Common myeloid progenitor, CD34-positive (primary cell): ENCODE measurements at regions of chr14 and their contacts with region 1.

Region 1: DNA sequence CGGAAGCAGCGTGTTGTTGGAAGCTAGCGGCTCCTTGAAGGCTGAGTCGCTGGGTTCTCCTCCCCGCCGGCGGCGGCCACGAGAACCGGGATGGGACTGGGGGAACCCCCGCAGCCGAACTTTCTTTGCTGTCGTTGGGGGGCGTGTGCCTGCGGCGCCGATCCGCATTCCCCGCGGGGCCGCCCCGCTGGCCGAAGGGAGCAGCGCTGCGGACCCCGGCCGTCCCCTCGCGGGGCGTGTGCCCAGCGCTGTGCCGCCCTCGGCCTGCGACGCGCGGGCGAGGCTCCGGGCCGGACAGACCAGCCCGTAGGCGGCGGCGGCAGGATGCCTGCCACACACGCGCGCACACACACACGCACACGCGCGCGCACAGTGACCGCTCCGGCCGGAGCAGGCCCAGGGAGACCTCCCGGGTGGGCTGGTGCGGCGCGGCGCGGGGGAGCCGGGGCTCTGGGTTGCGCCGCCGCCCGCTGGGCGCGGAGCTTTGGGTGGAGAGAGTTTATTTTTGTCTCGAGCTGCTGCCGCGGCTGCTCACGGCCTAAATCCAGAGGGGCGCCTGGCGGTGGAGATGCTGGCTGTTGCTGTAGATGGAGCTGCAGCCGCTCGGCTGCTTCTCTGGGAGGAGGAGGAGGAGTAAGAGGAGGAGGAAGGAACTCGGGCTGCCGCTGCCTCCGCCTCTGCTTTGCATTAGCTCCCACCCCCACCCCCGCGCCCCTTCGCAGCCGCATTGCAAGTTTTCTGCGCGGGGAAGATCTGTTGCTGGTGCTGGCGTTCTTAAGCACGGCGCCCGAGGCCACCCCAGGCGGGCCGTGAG is at the start of gene SAMD4A:
- DNase-seq: peak; percentile 71 to 85 (median 77)
- H3K4me3 ChIP-seq: peak within 1 kb of the TSS; percentile 65 to 92 (median 71)
- H3K27ac ChIP-seq: no peak within 1 kb of the TSS
- H3K4me1 ChIP-seq: peaks cover 7 to 39% (median 32%) of the 10 kb centered on the region in 4 experiments
- H3K27me3 ChIP-seq: peaks cover 0 to 15% (median 0%) of the 10 kb centered on the region in 5 experiments

Region 2: DNA sequence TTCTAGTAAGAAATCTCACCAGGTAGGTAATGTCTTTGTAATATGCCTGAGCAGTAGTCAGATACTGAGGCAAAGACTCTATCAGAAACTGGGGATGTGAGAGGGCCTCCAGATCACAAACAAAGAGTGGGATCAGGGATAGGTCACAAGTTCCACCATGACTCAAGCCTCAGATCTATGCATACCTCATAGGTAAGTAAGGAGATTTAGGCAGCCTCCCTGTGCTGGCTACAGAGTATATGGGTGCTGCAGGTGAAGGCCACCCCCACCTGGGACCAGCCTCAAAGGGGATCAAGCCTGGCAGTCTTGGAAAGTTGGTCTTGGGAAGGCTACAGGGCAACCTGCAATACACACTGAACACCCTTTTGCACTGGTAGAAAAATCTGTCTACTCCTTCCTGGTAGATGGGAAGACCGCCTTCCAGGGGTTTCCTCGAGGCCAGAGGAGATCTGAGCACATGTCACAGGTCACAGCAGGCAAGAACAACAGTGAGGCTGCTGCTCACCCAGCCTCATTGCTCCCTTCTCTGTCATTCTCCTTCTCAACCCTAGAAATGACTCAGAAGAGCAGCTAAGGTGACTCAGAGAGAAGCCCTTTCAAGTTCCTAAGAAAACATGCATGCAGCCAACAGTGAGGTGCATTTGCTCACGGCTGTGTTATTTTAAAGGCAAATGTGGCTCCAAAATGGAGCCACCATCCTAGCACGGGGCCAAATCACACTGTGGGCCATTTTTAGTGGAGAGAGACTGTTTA is 313.2 kb before region 1 on chr14:
- CTCF ChIA-PET with region 1: no interaction called
- POLR2A ChIA-PET with region 1: no interaction called
- DNase-seq: no peak
- H3K4me3 ChIP-seq: no peak overlapping the region
- H3K27ac ChIP-seq: no peak overlapping the region
- H3K4me1 ChIP-seq: no peaks in the 10 kb centered on the region
- H3K27me3 ChIP-seq: peaks cover 0 to 5% (median 3%) of the 10 kb centered on the region in 5 experiments

Region 3: GRCh38 chr14:54642801-54643697 is 76.4 kb after region 1 on chr14:
- CTCF ChIA-PET with region 1: interaction called, 21 read pairs
- POLR2A ChIA-PET with region 1: interaction called, 7 read pairs
- DNase-seq: peak; percentile 34 to 66 (median 58)
- H3K4me3 ChIP-seq: no peak overlapping the region
- H3K27ac ChIP-seq: no peak overlapping the region
- H3K4me1 ChIP-seq: no peaks in the 10 kb centered on the region
- H3K27me3 ChIP-seq: no peaks in the 10 kb centered on the region

Region 4: GRCh38 chr14:54683882-54684794 is 117.5 kb after region 1 on chr14:
- CTCF ChIA-PET with region 1: interaction called, 16 read pairs
- POLR2A ChIA-PET with region 1: no interaction called
- DNase-seq: peak in 2 of 3 donors; percentile 20 to 35
- H3K4me3 ChIP-seq: no peak overlapping the region
- H3K27ac ChIP-seq: no peak overlapping the region
- H3K4me1 ChIP-seq: peaks cover 0 to 21% (median 8%) of the 10 kb centered on the region in 4 experiments
- H3K27me3 ChIP-seq: no peaks in the 10 kb centered on the region

Region 5: GRCh38 chr14:54691525-54692283 is 125.1 kb after region 1 on chr14:
- CTCF ChIA-PET with region 1: interaction called, 16 read pairs
- POLR2A ChIA-PET with region 1: interaction called, 3 read pairs
- DNase-seq: peak; percentile 54 to 67 (median 66)
- H3K4me3 ChIP-seq: no peak overlapping the region
- H3K27ac ChIP-seq: no peak overlapping the region
- H3K4me1 ChIP-seq: peaks cover 0 to 12% (median 5%) of the 10 kb centered on the region in 4 experiments
- H3K27me3 ChIP-seq: no peaks in the 10 kb centered on the region

Region 6: DNA sequence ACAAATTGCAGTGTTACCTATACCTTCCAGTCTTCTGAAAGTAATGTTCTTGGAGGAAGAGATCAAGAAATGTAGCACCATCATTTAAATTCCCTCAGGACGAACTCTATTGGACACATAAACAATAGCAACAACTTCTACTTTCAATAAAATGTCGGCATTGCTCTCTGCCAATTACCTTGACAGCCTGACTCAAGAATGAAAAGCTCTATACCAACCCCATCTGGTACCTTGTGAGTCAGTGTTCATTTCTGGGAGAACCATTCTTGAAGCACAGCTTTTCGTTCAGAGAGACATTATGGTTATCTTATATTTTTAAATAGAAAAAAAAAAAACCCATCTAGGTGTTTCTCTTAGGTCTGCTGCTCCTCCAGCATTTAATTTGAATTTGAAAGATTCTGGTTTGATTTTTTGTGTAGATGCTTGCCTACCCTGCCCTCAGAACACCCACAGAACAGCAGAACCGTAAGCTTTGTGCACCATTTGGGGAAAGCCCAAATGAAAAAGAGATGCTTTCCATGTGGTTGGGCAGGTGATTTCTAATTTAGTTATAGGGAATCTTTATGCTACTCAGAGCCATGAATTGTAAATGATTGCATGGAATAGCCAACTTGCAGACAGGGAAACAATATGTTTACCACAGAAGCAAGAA is 156.3 kb after region 1 on chr14:
- CTCF ChIA-PET with region 1: interaction called, 50 read pairs
- POLR2A ChIA-PET with region 1: no interaction called
- DNase-seq: peak; percentile 65 to 79 (median 79)
- H3K4me3 ChIP-seq: peak overlapping the region in 1 of 7 experiments; percentile 37
- H3K27ac ChIP-seq: no peak overlapping the region
- H3K4me1 ChIP-seq: no peaks in the 10 kb centered on the region
- H3K27me3 ChIP-seq: no peaks in the 10 kb centered on the region

Region 7: GRCh38 chr14:54754623-54755386 is 188.2 kb after region 1 on chr14:
- CTCF ChIA-PET with region 1: no interaction called
- POLR2A ChIA-PET with region 1: no interaction called
- DNase-seq: no peak
- H3K4me3 ChIP-seq: no peak overlapping the region
- H3K27ac ChIP-seq: no peak overlapping the region
- H3K4me1 ChIP-seq: peaks cover 11 to 26% (median 20%) of the 10 kb centered on the region in 4 experiments
- H3K27me3 ChIP-seq: no peaks in the 10 kb centered on the region

Region 8: DNA sequence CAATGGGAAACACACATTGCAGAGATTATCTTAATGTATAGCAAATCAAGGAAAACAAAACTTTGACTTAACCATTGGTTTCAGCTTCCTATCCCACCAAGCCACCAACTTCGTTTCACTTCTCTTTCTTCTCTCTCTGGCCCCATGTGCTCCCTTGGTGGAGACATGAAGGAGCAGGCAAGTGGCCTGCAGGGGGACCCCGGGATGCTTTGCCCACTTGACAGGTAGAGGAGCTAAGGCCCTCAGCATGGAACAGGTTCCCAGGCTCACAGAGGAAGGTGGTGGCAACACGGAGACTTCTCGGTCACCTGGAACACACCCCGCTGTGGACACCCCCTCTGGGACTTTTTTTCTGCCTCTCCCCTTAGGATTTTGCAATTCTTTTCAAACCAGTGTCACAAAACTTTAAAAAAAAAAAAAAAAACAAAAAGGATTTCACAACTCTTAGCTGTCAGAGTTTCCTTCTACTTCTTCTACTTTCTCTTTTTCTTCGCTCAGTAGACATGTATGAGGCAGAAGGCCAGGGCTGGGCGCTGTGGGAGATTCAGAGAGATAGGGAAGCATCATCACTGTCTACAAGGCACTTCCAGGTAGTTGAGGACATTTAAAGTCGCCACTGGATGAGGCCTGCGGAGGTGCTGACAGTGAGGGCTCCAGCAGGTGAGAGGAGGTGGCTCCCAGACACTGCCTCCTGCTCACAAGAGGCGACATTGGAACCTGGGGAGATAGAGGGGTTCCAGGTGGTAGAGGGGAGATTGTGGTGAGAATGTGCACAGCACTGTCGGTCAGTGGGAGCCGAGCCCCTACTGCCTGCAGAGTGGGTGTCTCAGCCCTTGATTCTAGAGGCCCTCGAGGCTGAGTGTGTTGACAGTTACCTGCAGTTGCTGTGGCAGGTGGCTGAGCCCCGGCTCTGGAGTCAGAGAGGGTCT is 216.4 kb after region 1 on chr14:
- CTCF ChIA-PET with region 1: interaction called, 123 read pairs
- POLR2A ChIA-PET with region 1: no interaction called
- DNase-seq: peak; percentile 65 to 77 (median 70)
- H3K4me3 ChIP-seq: no peak overlapping the region
- H3K27ac ChIP-seq: no peak overlapping the region
- H3K4me1 ChIP-seq: peaks cover 0 to 41% (median 24%) of the 10 kb centered on the region in 4 experiments
- H3K27me3 ChIP-seq: no peaks in the 10 kb centered on the region

Region 9: DNA sequence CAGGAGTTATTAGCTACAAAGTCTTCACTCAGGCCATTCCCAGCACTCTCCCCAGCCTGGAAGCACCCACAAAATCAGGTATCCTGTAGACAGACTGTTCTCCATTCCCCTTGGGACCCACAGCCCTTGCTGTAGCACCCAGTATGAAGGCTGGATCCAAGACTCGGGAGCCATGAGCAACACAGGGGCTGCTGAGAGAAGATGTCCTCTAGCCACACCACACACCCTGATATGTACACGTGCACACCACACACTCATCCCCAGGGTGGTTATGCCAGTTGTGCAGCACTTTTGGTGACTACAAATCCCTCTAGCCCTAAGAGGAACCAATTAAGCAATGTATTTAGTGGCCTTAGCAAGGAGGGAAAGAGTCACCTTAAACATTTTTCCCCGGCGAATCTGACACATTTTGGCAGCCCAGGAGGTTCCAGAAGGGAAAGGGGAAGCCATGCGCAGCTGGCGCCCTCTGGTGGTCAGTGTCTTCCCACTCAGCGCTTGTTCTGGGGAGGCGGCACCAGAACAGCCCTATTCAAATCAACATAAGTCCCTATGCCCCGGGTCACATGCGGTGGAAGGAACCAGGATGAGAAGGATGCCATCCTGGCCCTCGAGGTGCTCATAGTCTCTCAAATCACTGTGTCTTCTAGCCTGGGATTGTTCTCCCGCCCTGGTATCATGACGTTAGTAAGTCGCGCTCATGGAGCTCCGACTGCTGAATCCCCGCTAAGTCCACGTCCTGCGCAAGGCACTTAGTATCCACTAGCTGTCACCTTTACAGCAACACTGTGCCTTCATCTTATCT is 239.1 kb after region 1 on chr14:
- CTCF ChIA-PET with region 1: interaction called, 63 read pairs
- POLR2A ChIA-PET with region 1: no interaction called
- DNase-seq: peak; percentile 80 to 87 (median 84)
- H3K4me3 ChIP-seq: peak overlapping the region in 1 of 7 experiments; percentile 19
- H3K27ac ChIP-seq: no peak overlapping the region
- H3K4me1 ChIP-seq: peaks cover 0 to 8% (median 0%) of the 10 kb centered on the region in 4 experiments
- H3K27me3 ChIP-seq: peaks cover 0 to 2% (median 0%) of the 10 kb centered on the region in 5 experiments